Mammary epithelial cell (primary cell): ENCODE measurements at regions of chr4 and their contacts with region 1.

Region 1: DNA sequence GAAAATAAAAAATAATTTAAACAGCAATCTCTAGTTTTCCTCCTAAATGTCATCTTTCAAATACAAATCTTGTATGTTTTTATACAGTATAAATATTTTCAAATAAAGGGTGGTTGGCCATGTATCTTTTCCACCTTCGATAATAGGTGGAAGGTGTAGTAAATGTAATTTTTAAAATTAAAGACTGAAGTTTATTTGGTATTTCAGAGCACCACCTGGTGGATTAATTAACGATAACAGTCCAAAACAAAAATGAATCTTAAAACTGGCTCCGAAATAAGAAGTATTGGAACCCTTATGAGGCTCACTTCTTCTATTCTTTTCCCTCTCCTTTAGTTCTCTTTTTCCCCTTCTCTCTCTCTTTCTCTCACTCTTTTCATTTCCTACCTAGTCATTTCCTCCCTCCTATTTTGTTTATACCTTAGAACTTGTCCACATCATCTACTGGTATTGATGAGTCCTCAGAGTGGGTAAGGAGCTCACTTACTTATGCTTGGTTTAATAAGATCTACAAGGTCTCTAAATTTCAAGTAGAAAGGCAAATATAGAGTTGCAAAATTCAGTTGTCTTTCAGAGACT is 82.9 kb upstream of the EXOC1L start:
- DNase-seq: no peak
- H3K4me3 ChIP-seq: no peak overlapping the region
- H3K27ac ChIP-seq: no peak overlapping the region
- H3K4me1 ChIP-seq: peaks cover 14% of the 10 kb centered on the region
- H3K27me3 ChIP-seq: no peaks in the 10 kb centered on the region
- CTCF ChIP-seq: peak; percentile 37 to 44

Region 2: GRCh38 chr4:54999003-54999402 is 737.7 kb before region 1 on chr4:
- CTCF ChIA-PET with region 1: no interaction called
- dilution Hi-C with region 1: no loop called
- in situ Hi-C with region 1: no loop called
- intact Hi-C with region 1: loop called (anchors 5 kb)
- DNase-seq: no peak
- H3K4me3 ChIP-seq: no peak overlapping the region
- H3K27ac ChIP-seq: no peak overlapping the region
- H3K4me1 ChIP-seq: no peaks in the 10 kb centered on the region
- H3K27me3 ChIP-seq: no peaks in the 10 kb centered on the region
- CTCF ChIP-seq: peak; percentile 44 to 58

Region 3: GRCh38 chr4:55345980-55346850 is 390.5 kb before region 1 on chr4 and contains the start of gene SRD5A3:
- CTCF ChIA-PET with region 1: no interaction called
- dilution Hi-C with region 1: no loop called
- in situ Hi-C with region 1: loop called in 1 of 2 experiments (anchors 10 kb)
- intact Hi-C with region 1: loop called (anchors 1 kb)
- DNase-seq: peak; percentile 73
- H3K4me3 ChIP-seq: peak within 1 kb of the TSS; percentile 78 to 97 (median 81)
- H3K27ac ChIP-seq: peak within 1 kb of the TSS; percentile 59
- H3K4me1 ChIP-seq: peaks cover 9% of the 10 kb centered on the region
- H3K27me3 ChIP-seq: no peaks in the 10 kb centered on the region
- CTCF ChIP-seq: peak; percentile 53 to 80
- total RNA-seq, gene SRD5A3: 12.1 to 12.5 TPM

Region 4: DNA sequence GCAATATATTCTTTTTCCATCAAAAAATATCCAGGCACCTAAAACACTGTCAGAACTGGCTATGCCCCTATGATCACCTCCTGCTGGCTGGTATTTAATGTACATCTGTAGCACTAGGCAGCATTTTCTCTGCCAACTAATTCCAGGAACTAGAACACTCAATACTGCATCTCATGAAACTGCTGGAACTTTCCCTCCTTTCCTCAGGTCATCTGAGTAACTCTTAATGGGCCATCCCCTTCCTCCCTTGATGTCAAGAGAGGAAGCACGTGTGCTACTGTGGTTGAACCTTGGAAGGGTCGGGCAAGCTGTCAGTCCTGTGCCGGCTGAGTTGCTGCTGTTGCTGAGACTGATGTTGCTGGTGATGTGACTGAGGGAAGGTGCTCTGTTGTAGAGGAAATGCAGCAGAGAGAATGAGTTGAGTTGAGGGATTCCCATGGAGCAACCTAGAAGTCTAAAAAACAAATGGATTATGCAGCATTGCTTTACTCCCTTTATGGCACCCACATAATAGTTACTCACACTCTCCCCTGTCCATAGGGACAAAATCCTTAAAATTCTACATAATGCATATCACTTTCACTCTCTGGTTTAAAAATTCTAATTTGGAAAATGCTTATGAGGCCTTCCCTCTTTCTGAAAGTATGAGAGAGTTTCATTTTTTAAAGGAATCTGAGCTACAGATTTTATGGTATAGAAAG is 301.4 kb before region 1 on chr4:
- CTCF ChIA-PET with region 1: no interaction called
- dilution Hi-C with region 1: no loop called
- in situ Hi-C with region 1: loop called (anchors 10 to 25 kb)
- intact Hi-C with region 1: no loop called
- DNase-seq: no peak
- H3K4me3 ChIP-seq: no peak overlapping the region
- H3K27ac ChIP-seq: no peak overlapping the region
- H3K4me1 ChIP-seq: no peaks in the 10 kb centered on the region
- H3K27me3 ChIP-seq: no peaks in the 10 kb centered on the region
- CTCF ChIP-seq: peak; percentile 12 to 39

Region 5: DNA sequence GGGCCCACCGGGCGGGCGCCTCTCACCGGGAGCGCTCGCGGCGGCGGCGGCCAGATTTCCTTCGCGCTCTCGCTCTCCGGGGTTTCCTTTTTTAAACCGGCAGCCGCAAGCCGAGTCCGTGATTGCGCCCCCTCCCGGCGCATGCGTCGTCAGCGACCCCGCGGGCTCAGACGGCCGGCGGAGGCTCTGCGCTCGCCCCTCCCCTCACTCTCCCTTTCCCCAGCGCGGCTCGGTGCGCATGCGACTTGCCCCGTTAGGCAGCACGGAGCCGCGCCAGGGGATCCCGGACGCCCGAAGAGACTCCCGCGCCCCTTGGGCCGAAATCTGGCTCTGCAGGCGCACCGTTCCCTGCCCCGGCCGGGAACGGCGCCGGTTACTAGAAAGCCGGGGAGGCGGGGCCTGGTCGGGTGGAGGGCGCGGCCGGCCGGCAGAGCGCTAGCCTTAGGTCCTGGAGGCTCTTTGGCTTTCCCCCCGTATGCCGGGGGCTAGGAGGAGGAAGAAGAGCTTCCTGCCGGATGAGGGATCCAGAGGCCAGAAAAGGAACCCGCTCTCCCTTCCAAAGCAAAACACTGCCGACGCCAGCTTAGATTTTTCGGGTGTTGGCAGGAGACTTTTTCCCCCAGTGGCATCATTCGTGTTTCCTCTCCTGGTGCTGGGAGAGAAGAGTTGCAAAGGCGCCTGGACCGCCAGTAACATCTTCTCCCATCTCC is 189.8 kb before region 1 on chr4 and contains the start of gene CLOCK:
- CTCF ChIA-PET with region 1: no interaction called
- dilution Hi-C with region 1: no loop called
- in situ Hi-C with region 1: loop called in 1 of 2 experiments (anchors 10 kb)
- intact Hi-C with region 1: no loop called
- DNase-seq: peak; percentile 84
- H3K4me3 ChIP-seq: peak within 1 kb of the TSS; percentile 66 to 84 (median 77)
- H3K27ac ChIP-seq: peak within 1 kb of the TSS; percentile 87
- H3K4me1 ChIP-seq: peaks cover 45% of the 10 kb centered on the region
- H3K27me3 ChIP-seq: no peaks in the 10 kb centered on the region
- CTCF ChIP-seq: peak in 1 of 2 donors; percentile 51
- total RNA-seq, gene CLOCK: 29.3 to 35.3 TPM

Region 6: GRCh38 chr4:55866973-55867574 is 130.4 kb after region 1 on chr4:
- CTCF ChIA-PET with region 1: no interaction called
- dilution Hi-C with region 1: no loop called
- in situ Hi-C with region 1: no loop called
- intact Hi-C with region 1: loop called (anchors 2 kb)
- DNase-seq: peak; percentile 54
- H3K4me3 ChIP-seq: no peak overlapping the region
- H3K27ac ChIP-seq: peak overlapping the region; percentile 59
- H3K4me1 ChIP-seq: peaks cover 20% of the 10 kb centered on the region
- H3K27me3 ChIP-seq: no peaks in the 10 kb centered on the region
- CTCF ChIP-seq: peak; percentile 82 to 88